Left ventricle myocardium inferior (tissue), 1 donor: ENCODE measurements at regions of chr18 and their contacts with region 1.

Region 1: GRCh38 chr18:60883587-60883986 is 449.6 kb upstream of the CDH20 start:
- DNase-seq: no peak
- H3K4me3 ChIP-seq: no peak overlapping the region
- H3K27ac ChIP-seq: no peak overlapping the region
- H3K4me1 ChIP-seq: no peaks in the 10 kb centered on the region
- H3K27me3 ChIP-seq: no peaks in the 10 kb centered on the region
- CTCF ChIP-seq: no peak

Region 2: DNA sequence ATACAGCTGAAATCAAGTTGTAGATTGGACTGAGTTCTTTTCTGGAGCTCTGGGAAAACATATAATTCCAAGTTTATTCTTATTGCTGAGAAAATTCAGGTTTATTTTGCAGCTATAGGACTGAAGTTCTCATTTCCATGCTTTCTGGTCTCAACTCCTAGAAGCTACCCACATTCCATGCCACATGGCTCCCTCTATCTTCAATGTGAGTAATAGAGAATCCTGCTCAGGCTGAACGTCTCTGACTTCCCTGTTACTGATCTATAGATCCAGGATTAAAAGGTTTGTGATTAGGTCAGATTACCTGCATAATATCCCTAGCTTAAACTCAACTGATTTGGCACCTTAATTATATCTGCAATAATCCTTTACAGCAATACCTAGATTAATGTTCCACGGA is 57.2 kb before region 1 on chr18:
- intact Hi-C with region 1: loop called (anchors 10 kb)
- DNase-seq: no peak
- H3K4me3 ChIP-seq: no peak overlapping the region
- H3K27ac ChIP-seq: no peak overlapping the region
- H3K4me1 ChIP-seq: no peaks in the 10 kb centered on the region
- H3K27me3 ChIP-seq: no peaks in the 10 kb centered on the region
- CTCF ChIP-seq: peak; percentile 26